Esophagus muscularis mucosa (tissue), 4 donors: ENCODE measurements at regions of chr7 and their contacts with region 1.

Region 1: DNA sequence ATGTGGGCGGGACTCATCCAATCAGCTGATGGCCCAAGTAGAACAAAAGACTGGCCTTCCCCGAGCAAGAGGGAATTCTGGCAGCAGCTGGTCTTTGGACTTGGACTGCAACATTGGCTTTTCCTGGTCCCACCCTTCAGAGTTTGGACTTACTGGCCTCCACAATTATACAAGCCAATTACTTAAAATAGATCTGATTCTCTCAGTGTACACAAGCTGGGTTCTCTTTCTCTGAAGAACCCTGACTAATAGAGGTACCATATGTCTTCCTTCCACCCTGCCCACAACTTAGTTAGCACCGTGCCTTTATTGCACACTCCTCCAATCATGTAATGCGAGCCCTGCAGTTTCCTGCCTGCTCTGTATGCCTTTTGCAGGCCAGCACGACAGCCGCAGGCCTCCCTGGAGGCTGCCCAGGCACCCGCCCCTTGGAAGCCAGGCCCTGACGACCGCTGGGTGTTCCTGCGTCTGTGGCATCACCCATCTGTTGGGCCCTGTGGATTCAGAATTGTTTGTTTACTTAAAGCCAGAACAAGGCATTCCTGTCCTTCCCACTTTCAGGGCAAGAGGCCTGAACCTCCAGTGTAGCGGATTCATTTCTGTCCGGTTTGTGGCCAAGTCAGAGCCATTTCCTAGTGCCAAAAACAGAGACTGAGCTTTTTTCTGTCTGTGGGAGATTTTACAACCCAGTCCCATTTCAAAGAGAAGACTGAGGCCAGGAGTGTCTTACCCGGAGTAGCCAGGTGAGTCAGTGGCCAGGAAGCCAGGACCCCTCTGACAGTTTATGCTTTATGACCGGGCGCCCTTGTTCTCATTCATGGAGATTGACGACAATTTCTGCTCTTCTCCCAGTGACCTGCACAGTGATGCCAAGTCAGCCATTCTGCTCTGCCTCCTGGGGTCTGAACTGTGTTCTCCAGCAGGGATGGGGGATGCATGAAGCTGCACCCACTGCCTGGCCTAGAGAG is 968 bp upstream of the INMT start:
- DNase-seq: no peak
- H3K4me3 ChIP-seq: peak overlapping the region; percentile 57 to 67 (median 62)
- H3K27ac ChIP-seq: peak overlapping the region; percentile 80 to 89 (median 88)
- H3K4me1 ChIP-seq: peaks cover 55 to 67% (median 66%) of the 10 kb centered on the region in 4 donors
- H3K27me3 ChIP-seq: no peaks in the 10 kb centered on the region
- CTCF ChIP-seq: no peak
- EP300 ChIP-seq: no peak
- POLR2A ChIP-seq: no peak

Region 2: DNA sequence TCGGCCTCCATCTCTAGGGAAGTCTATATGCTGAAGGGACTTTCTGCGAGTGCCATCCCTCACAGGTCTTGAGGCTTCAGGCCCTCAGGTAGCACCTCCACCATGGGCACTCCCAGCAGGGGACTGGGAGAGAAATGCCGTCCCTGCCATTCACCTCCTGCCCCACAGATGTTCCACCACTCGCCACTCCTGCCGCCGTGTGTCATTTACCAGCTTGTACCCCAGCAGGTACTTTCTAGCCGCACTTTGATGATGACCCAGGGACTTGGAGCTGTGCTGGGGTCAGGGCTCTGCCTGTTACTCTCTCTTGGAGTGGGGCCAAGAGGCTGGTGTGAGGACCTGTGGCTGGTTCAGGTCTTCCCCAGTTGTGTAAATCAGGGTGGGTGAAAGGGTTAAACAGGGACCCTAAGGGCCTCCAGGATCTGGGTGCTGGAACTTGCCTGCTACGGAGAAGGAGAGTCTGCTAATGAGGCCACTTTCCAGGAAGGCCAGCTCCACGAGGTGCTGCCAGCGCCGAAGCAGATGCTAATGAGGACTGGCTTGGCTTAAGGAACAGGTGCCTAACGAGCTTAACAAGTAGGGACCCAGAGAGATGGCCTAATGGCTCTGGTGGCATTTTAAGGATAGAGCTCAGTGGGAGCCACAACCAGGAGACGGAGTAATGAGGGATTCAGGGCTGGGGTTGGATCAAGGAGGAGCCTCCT is 101.1 kb before region 1 on chr7:
- intact Hi-C with region 1: no loop called
- DNase-seq: no peak
- H3K4me3 ChIP-seq: no peak overlapping the region
- H3K27ac ChIP-seq: no peak overlapping the region
- H3K4me1 ChIP-seq: no peaks in the 10 kb centered on the region
- H3K27me3 ChIP-seq: no peaks in the 10 kb centered on the region
- CTCF ChIP-seq: no peak
- EP300 ChIP-seq: no peak
- POLR2A ChIP-seq: no peak

Region 3: GRCh38 chr7:30791114-30791779 is 40.3 kb after region 1 on chr7:
- intact Hi-C with region 1: loop called (anchors 5 kb)
- DNase-seq: no peak
- H3K4me3 ChIP-seq: no peak overlapping the region
- H3K27ac ChIP-seq: peak overlapping the region in 2 of 4 donors; percentile 9
- H3K4me1 ChIP-seq: peaks cover 6 to 62% (median 30%) of the 10 kb centered on the region in 4 donors
- H3K27me3 ChIP-seq: no peaks in the 10 kb centered on the region
- CTCF ChIP-seq: no peak
- EP300 ChIP-seq: no peak
- POLR2A ChIP-seq: no peak